ENCODE measurements at regions of chr17 and their contacts with region 1.

Region 1: GRCh38 chr17:74864866-74865395 is 5.2 kb upstream of the GRIN2C start:
- DNase-seq: peak; percentile 63
- H3K4me3 ChIP-seq: no peak overlapping the region
- H3K27ac ChIP-seq: no peak overlapping the region
- H3K4me1 ChIP-seq: peaks cover 18% of the 10 kb centered on the region
- H3K27me3 ChIP-seq: peaks cover 12 to 19% of the 10 kb centered on the region in 2 experiments
- CTCF ChIP-seq: peak; percentile 93 to 94
- POLR2A ChIP-seq: no peak

Region 2: DNA sequence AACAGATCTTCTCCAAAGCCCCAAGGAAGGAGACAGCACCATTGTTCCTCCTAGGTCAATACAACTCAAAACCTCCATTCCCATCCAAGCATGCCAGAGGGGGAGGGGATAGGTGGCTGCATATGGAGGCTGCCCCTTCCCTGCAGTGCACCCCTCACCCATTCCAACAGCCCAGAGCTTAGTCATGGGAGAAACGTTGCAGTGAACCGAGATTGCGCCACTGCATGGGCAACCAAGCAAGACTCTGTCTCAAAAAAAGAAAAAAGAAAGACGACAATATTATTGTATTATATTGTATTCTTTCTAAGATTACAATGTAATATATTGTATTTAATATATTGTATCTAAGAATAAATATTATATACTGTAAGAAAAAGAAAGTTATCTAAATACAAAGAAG is 205.0 kb before region 1 on chr17:
- CTCF ChIA-PET with region 1: interaction called, 14 read pairs
- POLR2A ChIA-PET with region 1: no interaction called
- dilution Hi-C with region 1: no loop called
- intact Hi-C with region 1: loop called (anchors 1 kb)
- DNase-seq: no peak
- H3K4me3 ChIP-seq: no peak overlapping the region
- H3K27ac ChIP-seq: no peak overlapping the region
- H3K4me1 ChIP-seq: no peaks in the 10 kb centered on the region
- H3K27me3 ChIP-seq: no peaks in the 10 kb centered on the region
- CTCF ChIP-seq: no peak
- POLR2A ChIP-seq: no peak

Region 3: DNA sequence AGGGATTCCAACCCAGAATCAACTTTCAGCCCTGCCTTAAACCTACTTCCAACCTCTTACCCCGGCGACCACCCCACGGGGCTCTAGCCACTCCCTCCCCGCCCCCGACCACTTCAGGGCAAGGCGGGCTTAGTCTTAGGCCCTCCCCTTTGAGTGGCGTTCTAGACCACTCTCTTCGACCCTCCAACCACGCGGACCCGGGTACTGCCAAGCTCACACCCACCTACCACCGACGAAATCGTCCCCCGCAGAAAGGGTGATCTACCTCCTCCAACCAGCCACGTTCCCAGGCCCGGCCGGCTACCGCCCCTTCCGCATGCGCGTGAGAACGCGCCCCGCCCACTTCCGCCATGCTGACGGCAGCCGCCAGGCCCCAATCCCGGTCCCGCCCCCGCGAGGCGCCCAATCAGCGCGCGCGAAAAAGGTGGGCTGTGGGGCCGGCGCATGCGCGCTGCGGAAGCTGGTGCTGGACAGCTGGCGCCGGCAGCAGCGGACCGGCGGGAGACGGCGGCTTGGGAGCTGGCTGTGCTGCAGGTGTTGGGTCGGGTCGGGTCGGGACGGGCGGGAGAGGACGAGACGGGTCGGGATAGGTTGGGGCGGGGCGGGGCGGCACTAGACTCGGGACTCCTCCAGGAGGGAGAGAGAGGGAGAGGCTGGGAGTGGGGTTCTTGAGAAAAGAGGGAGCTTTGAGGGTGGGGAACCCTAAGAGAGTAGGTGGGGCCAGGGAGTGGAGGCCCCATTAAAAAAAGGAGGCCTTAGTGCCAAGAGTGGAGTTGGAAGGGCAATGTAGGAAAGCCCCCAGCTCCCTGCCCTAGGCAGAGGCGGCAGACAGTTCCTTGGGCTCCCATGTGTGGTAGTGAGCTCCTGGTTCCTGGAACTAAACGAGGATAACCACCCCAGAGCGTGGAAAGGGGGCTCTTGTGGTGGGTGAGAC is 88.6 kb before region 1 on chr17 and contains the start of gene NAT9:
- CTCF ChIA-PET with region 1: interaction called, 29 read pairs
- POLR2A ChIA-PET with region 1: no interaction called
- dilution Hi-C with region 1: no loop called
- intact Hi-C with region 1: loop called (anchors 5 kb)
- DNase-seq: peak; percentile 98
- H3K4me3 ChIP-seq: peak within 1 kb of the TSS; percentile 49 to 85 (median 75)
- H3K27ac ChIP-seq: peak within 1 kb of the TSS; percentile 65
- H3K4me1 ChIP-seq: peaks cover 7% of the 10 kb centered on the region
- H3K27me3 ChIP-seq: no peaks in the 10 kb centered on the region
- CTCF ChIP-seq: no peak
- POLR2A ChIP-seq: peak; percentile 47
- total RNA-seq, gene NAT9: 44.8 and 45.8 TPM in 2 replicates

Region 4: GRCh38 chr17:74785096-74785980 is 79.6 kb before region 1 on chr17:
- CTCF ChIA-PET with region 1: interaction called, 325 read pairs
- POLR2A ChIA-PET with region 1: no interaction called
- dilution Hi-C with region 1: no loop called
- intact Hi-C with region 1: no loop called
- DNase-seq: no peak
- H3K4me3 ChIP-seq: no peak overlapping the region
- H3K27ac ChIP-seq: no peak overlapping the region
- H3K4me1 ChIP-seq: no peaks in the 10 kb centered on the region
- H3K27me3 ChIP-seq: no peaks in the 10 kb centered on the region
- CTCF ChIP-seq: peak in 1 of 2 donors; percentile 8
- POLR2A ChIP-seq: no peak

Region 5: GRCh38 chr17:74790161-74791054 is 74.5 kb before region 1 on chr17:
- CTCF ChIA-PET with region 1: interaction called, 325 read pairs
- POLR2A ChIA-PET with region 1: no interaction called
- dilution Hi-C with region 1: no loop called
- intact Hi-C with region 1: loop called (anchors 1 kb)
- DNase-seq: no peak
- H3K4me3 ChIP-seq: no peak overlapping the region
- H3K27ac ChIP-seq: no peak overlapping the region
- H3K4me1 ChIP-seq: no peaks in the 10 kb centered on the region
- H3K27me3 ChIP-seq: no peaks in the 10 kb centered on the region
- CTCF ChIP-seq: no peak
- POLR2A ChIP-seq: no peak

Region 6: GRCh38 chr17:74825952-74826719 is 38.8 kb before region 1 on chr17:
- CTCF ChIA-PET with region 1: interaction called, 17 read pairs
- POLR2A ChIA-PET with region 1: no interaction called
- dilution Hi-C with region 1: no loop called
- intact Hi-C with region 1: no loop called
- DNase-seq: peak; percentile 77
- H3K4me3 ChIP-seq: no peak overlapping the region
- H3K27ac ChIP-seq: no peak overlapping the region
- H3K4me1 ChIP-seq: peaks cover 13% of the 10 kb centered on the region
- H3K27me3 ChIP-seq: no peaks in the 10 kb centered on the region
- CTCF ChIP-seq: no peak
- POLR2A ChIP-seq: no peak

Region 7: DNA sequence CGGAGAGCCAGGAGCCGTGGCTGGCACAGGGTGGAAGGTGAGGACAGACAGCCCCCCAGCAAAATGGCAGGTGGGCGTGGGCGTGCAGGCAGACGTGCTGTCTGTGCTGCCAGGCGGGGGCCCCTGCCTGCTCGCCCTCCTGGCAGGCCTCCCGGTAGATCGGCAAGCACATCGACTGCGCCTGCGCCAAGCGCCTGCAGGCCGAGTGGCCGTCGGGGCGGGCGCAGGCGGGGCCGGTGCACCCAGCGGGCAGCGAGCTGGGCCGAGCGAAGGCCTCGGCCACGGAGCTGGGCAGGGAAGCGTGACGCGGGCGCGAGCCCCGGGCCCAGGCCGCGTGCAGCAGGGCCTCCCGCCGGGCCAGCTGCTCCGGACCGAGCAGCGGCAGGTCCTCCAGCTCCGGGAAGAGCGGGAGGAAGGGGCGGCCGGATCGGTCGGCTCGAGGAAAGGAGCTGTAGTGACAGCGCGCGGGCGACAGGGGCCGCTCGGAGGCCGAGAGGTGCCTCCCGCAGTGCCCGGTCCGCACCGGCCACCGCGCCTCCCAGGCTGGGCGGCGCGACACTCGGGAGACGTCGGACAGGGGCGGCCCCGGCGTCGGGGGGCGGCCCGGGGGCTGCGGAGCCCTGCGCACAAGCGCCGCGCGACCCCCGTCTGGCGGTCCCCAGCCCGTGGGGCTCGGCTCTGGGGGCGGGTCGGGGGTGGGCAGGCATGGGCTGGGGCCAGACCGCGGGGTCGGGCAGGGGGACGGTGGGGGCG is 22.2 kb before region 1 on chr17:
- CTCF ChIA-PET with region 1: interaction called, 227 read pairs
- POLR2A ChIA-PET with region 1: no interaction called
- dilution Hi-C with region 1: no loop called
- intact Hi-C with region 1: loop called (anchors 1 kb)
- DNase-seq: peak; percentile 82
- H3K4me3 ChIP-seq: peak overlapping the region in 1 of 3 experiments; percentile 43
- H3K27ac ChIP-seq: no peak overlapping the region
- H3K4me1 ChIP-seq: no peaks in the 10 kb centered on the region
- H3K27me3 ChIP-seq: no peaks in the 10 kb centered on the region
- CTCF ChIP-seq: peak; percentile 50 to 64
- POLR2A ChIP-seq: no peak

Region 8: DNA sequence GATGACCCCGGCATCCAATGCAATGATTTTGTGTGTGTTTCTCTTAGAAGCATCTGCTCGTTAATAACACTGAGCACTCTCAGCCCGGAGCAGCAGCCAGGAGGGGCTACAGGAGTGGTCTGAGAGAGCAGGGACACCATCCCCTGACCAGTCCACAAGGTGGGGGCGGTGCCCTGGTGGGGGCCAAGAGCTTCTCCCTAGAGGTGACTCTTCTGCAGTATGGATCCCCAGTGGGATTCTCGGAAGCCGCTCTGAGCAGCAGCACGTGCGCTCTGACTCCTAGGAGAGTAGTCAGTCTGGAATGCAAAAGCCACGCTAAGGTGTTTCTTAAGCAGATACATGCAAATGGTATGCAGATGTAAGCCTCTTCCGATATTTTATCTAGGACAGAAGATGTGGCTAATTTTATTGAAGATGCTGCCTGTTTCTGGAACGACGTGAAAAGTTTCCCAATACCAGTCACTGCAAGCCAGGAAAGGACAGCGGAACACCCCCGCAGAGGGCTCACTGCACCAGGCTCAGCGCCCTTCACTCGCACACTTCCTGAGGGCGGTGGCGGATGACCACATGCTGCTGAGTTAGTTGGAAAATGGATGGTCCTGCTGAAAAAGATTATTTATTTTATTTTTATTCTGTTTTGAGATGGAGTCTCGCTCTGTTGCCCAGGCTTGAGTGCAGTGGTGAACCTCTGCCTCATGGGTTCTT is 18.3 kb after region 1 on chr17:
- CTCF ChIA-PET with region 1: no interaction called
- POLR2A ChIA-PET with region 1: no interaction called
- dilution Hi-C with region 1: no loop called
- intact Hi-C with region 1: no loop called
- DNase-seq: no peak
- H3K4me3 ChIP-seq: no peak overlapping the region
- H3K27ac ChIP-seq: no peak overlapping the region
- H3K4me1 ChIP-seq: no peaks in the 10 kb centered on the region
- H3K27me3 ChIP-seq: no peaks in the 10 kb centered on the region
- CTCF ChIP-seq: no peak
- POLR2A ChIP-seq: no peak